ENCODE measurements at regions of chr3 and their contacts with region 1.

Region 1: DNA sequence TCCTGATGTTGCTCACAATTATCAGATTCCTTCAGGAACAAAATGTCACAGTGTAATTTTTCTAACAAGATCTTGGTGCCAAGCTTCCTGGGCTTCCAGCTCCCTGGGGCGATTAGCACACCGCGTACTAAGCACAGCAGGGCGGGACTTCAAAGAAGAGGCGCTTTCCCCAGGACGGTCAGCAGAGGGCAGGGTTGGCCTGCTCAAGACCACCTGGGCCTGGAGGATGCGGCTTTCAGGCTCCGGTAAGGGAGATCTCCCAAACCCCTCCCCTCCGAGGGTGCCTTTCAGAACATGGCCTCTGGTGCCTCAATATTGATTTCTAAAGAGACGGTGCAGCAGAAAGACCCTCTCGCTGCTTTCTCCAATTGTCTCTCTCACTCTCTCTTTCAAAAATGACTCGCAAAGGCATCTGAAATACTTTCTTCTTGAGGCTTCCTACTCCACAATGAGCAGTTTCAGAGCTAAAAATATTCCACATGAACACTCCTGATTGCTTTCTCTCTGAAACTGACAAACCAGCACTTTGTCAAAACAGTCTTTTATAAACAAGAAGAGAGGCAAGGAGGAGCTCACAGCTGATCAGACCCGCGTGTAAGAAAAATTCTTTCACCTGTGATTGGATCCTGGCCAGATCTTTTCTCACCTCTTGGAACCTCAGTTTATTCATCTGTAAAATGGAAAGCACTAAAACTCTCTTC is 154.0 kb downstream of the ADAMTS9 start:
- DNase-seq: peak; percentile 91 to 92
- H3K4me3 ChIP-seq: no peak overlapping the region
- H3K27ac ChIP-seq: peak overlapping the region in 2 of 3 donors; percentile 44 to 59
- H3K4me1 ChIP-seq: peaks cover 5 to 10% of the 10 kb centered on the region in 2 donors
- H3K27me3 ChIP-seq: no peaks in the 10 kb centered on the region
- CTCF ChIP-seq: peak; percentile 62 to 94 (median 82)
- POLR2A ChIP-seq: no peak

Region 2: GRCh38 chr3:65170390-65171042 is 636.7 kb after region 1 on chr3:
- intact Hi-C with region 1: loop called (anchors 5 kb)
- DNase-seq: peak; percentile 75 to 94
- H3K4me3 ChIP-seq: no peak overlapping the region
- H3K27ac ChIP-seq: peak overlapping the region in 2 of 3 donors; percentile 29 to 46
- H3K4me1 ChIP-seq: peaks cover 9 to 20% of the 10 kb centered on the region in 2 donors
- H3K27me3 ChIP-seq: no peaks in the 10 kb centered on the region
- CTCF ChIP-seq: peak in 3 of 6 experiments; percentile 31 to 41 (median 31)
- POLR2A ChIP-seq: no peak

Region 3: DNA sequence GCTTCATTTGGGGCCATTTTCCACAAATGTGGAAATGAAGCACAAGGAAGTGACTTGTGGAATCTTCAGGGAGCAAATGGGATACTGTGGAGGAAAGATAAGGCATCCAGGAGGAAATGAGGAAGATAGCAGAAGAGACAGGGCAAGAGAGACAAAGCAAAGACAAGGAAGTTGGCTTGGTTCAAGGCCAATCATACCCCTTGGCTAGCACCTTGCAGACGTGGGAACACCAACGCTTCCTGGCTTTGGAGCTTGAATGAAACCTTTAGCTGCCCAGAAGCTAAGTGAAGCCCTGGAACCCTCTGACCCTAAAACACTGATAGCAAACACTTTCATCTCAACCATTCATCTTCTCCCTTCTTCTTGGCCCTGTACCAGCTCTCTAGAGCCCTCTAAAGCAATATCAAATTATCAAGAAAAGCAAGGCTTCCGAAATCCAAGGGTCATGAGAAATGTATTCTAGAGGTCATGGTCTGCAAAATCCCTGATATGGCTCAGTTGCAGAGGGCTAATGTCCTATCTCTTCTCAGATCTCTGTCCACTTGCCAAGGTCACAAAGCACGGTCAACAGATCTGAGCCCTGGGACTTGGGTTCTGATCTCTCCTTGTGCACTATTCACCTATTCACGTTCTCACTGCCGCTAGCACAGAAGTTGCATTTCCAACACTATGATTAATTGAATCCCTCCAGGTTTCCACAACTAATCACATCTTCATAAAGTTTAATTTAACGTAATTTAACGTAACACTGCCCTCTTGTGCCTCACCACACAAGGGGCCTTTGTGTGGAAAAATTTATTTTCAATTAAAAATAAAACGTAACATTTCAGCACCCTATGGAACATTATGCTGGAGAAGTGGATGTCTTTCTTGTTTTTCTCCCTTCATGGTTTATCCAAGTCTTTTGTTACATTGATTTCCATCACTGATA is 711.6 kb after region 1 on chr3:
- intact Hi-C with region 1: loop called (anchors 10 kb)
- DNase-seq: no peak
- H3K4me3 ChIP-seq: no peak overlapping the region
- H3K27ac ChIP-seq: no peak overlapping the region
- H3K4me1 ChIP-seq: no peaks in the 10 kb centered on the region
- H3K27me3 ChIP-seq: no peaks in the 10 kb centered on the region
- CTCF ChIP-seq: peak in 4 of 6 experiments; percentile 32 to 41 (median 36)
- POLR2A ChIP-seq: no peak